ENCODE measurements at regions of chr12 and their contacts with region 1.

Region 1: GRCh38 chr12:56521590-56522371 is at the start of gene RBMS2:
- DNase-seq: no peak
- ATAC-seq: peak; percentile 84
- H3K4me3 Mint-ChIP-seq: peak within 1 kb of the TSS; percentile 83
- H3K27ac Mint-ChIP-seq: peak within 1 kb of the TSS; percentile 72
- H3K4me1 Mint-ChIP-seq: peaks cover 22% of the 10 kb centered on the region
- H3K27me3 Mint-ChIP-seq: peaks cover 3% of the 10 kb centered on the region
- CTCF ChIP-seq: no peak
- total RNA-seq, gene RBMS2: 2.7 and 3.4 TPM in 2 replicates

Region 2: GRCh38 chr12:56551070-56551469 is 29.3 kb after region 1 on chr12:
- CTCF ChIA-PET with region 1: no interaction called
- POLR2A ChIA-PET with region 1: no interaction called
- intact Hi-C with region 1: loop called (anchors 5 kb)
- DNase-seq: no peak
- ATAC-seq: no peak
- H3K4me3 Mint-ChIP-seq: no peak overlapping the region
- H3K27ac Mint-ChIP-seq: no peak overlapping the region
- H3K4me1 Mint-ChIP-seq: no peaks in the 10 kb centered on the region
- H3K27me3 Mint-ChIP-seq: no peaks in the 10 kb centered on the region
- CTCF ChIP-seq: no peak

Region 3: DNA sequence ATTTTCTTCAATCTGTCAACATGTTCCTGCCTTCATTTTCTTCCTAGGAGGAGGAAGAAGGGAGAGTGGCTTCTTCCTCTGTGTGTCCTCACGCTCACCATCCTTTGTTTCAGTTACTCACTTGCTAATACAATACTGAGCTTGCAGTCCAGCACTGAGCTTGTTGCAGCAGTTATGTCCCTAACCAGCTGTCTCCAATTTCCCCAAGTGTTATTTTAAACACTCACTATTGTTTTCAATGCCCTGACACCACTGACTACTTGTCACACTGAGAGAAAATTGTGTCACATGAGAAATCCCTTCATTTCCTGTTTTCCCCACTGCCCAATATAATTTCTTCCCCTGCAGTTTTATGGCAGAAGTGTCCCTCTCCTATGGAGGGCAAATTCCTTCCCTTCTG is 294.7 kb after region 1 on chr12:
- CTCF ChIA-PET with region 1: no interaction called
- POLR2A ChIA-PET with region 1: no interaction called
- intact Hi-C with region 1: no loop called
- DNase-seq: no peak
- ATAC-seq: no peak
- H3K4me3 Mint-ChIP-seq: no peak overlapping the region
- H3K27ac Mint-ChIP-seq: no peak overlapping the region
- H3K4me1 Mint-ChIP-seq: no peaks in the 10 kb centered on the region
- H3K27me3 Mint-ChIP-seq: peaks cover 9% of the 10 kb centered on the region
- CTCF ChIP-seq: no peak

Region 4: GRCh38 chr12:57101844-57102695 is 580.3 kb after region 1 on chr12:
- CTCF ChIA-PET with region 1: no interaction called
- POLR2A ChIA-PET with region 1: interaction called, 12 read pairs
- intact Hi-C with region 1: no loop called
- DNase-seq: no peak
- ATAC-seq: peak; percentile 26
- H3K4me3 Mint-ChIP-seq: no peak overlapping the region
- H3K27ac Mint-ChIP-seq: peak overlapping the region; percentile 50
- H3K4me1 Mint-ChIP-seq: peaks cover 28% of the 10 kb centered on the region
- H3K27me3 Mint-ChIP-seq: no peaks in the 10 kb centered on the region
- CTCF ChIP-seq: no peak

Measured in activated B cell treated with CpG ODN at 0.5 μM for 24 hours (primary cell).